ENCODE measurements at regions of chrX and their contacts with region 1.

Region 1: DNA sequence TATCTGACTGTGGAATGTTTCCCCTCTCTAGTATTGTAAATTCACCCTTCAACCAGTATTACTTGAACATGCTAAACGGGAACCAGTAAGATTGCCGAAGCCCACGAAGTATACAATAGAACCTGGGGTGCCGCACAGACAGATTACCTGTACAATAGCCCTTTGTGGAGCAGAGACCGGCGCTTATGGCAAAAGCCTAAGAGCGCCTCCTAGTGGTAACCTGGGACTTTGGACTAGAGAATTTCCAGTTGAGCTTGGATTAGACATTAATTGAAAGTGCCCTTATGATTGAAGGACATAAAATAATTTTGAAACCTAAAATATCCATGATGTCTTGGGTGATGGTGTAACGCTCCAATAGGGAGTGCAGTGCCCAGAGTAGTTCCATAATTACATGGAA is 14.1 kb downstream of the ZNF157 start:
- DNase-seq: peak; percentile 42 to 66 (median 49)
- H3K4me3 ChIP-seq: no peak overlapping the region
- H3K27ac ChIP-seq: no peak overlapping the region
- H3K4me1 ChIP-seq: no peaks in the 10 kb centered on the region
- H3K27me3 ChIP-seq: no peaks in the 10 kb centered on the region
- CTCF ChIP-seq: peak; percentile 50 to 63 (median 50)
- EP300 ChIP-seq: no peak
- POLR2A ChIP-seq: no peak

Region 2: GRCh38 chrX:47187106-47187677 is 197.3 kb before region 1 on chrX:
- intact Hi-C with region 1: loop called in 3 of 4 experiments (anchors 5 to 10 kb)
- DNase-seq: peak in 1 of 5 donors; percentile 31
- H3K4me3 ChIP-seq: no peak overlapping the region
- H3K27ac ChIP-seq: no peak overlapping the region
- H3K4me1 ChIP-seq: peaks cover 2% of the 10 kb centered on the region
- H3K27me3 ChIP-seq: no peaks in the 10 kb centered on the region
- CTCF ChIP-seq: no peak
- EP300 ChIP-seq: no peak
- POLR2A ChIP-seq: no peak

Region 3: GRCh38 chrX:47193475-47194193 is 190.9 kb before region 1 on chrX and contains the start of gene UBA1:
- intact Hi-C with region 1: loop called in 3 of 4 experiments (anchors 5 to 10 kb)
- DNase-seq: peak; percentile 97 to 98 (median 97)
- H3K4me3 ChIP-seq: peak within 1 kb of the TSS; percentile 94
- H3K27ac ChIP-seq: peak within 1 kb of the TSS; percentile 84 to 87
- H3K4me1 ChIP-seq: peaks cover 4% of the 10 kb centered on the region
- H3K27me3 ChIP-seq: no peaks in the 10 kb centered on the region
- CTCF ChIP-seq: peak; percentile 73 to 95 (median 94)
- EP300 ChIP-seq: no peak
- POLR2A ChIP-seq: peak; percentile 92
- total RNA-seq, gene UBA1: 91.8 to 196 (median 177) TPM

Region 4: DNA sequence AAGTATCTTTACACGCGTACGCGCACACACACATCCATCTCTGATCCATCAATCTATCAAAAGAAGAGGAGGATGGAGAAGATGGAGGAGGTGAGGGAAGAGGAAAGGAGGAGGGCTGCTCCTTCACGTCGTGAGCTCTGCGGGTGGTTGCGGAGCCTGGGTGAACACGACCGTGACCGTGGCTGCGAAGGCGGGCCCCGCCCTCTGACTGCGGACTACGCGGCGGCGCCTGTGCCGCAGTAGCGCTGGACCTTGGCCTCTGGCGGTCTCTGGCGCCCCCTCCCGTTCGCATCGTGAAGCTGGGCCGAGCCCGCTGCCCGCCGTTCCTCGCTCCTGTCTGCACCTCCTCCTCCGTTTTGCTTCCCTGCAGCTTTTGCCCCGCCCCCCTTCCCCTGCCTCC is 138.8 kb after region 1 on chrX:
- intact Hi-C with region 1: loop called in 1 of 4 experiments (anchors 10 kb)
- DNase-seq: peak; percentile 79 to 91 (median 88)
- H3K4me3 ChIP-seq: peak overlapping the region; percentile 50
- H3K27ac ChIP-seq: no peak overlapping the region
- H3K4me1 ChIP-seq: no peaks in the 10 kb centered on the region
- H3K27me3 ChIP-seq: no peaks in the 10 kb centered on the region
- CTCF ChIP-seq: peak; percentile 54 to 76 (median 65)
- EP300 ChIP-seq: no peak
- POLR2A ChIP-seq: no peak